ENCODE measurements at regions of chr11 and their contacts with region 1.

Region 1: GRCh38 chr11:65540297-65541092 is 15.6 kb downstream of the SCYL1 start:
- DNase-seq: peak; percentile 90 to 91
- ATAC-seq: peak; percentile 69 to 88
- H3K4me3 ChIP-seq: peak overlapping the region; percentile 32
- H3K27ac ChIP-seq: peak overlapping the region; percentile 66 to 88
- H3K4me1 ChIP-seq: peaks cover 10% of the 10 kb centered on the region
- CTCF ChIP-seq: peak; percentile 82
- EP300 ChIP-seq: no peak; a peak in 1 of 5 replicates
- POLR2A ChIP-seq: peak; percentile 54
- RAD21 ChIP-seq: peak; percentile 82 to 86

Region 2: GRCh38 chr11:64762674-64763525 is 777.6 kb before region 1 on chr11:
- CTCF ChIA-PET with region 1: no interaction called
- POLR2A ChIA-PET with region 1: no interaction called
- DNase-seq: no peak
- ATAC-seq: no peak
- H3K4me3 ChIP-seq: no peak overlapping the region
- H3K27ac ChIP-seq: no peak overlapping the region
- H3K4me1 ChIP-seq: peaks cover 5% of the 10 kb centered on the region; the same call in 1 of the 3 replicates
- CTCF ChIP-seq: no peak
- EP300 ChIP-seq: no peak
- POLR2A ChIP-seq: no peak
- RAD21 ChIP-seq: no peak

Region 3: GRCh38 chr11:64971421-64972233 is 568.9 kb before region 1 on chr11 and contains the start of gene MAJIN:
- CTCF ChIA-PET with region 1: no interaction called
- POLR2A ChIA-PET with region 1: no interaction called
- DNase-seq: peak; percentile 69 to 88
- ATAC-seq: peak; percentile 64 to 79
- H3K4me3 ChIP-seq: peak within 1 kb of the TSS; percentile 27
- H3K27ac ChIP-seq: peak within 1 kb of the TSS; percentile 56 to 71; a peak in 5 of 6 replicates
- H3K4me1 ChIP-seq: peaks cover 9% of the 10 kb centered on the region
- CTCF ChIP-seq: no peak
- EP300 ChIP-seq: no peak
- POLR2A ChIP-seq: no peak; the same call in 1 of the 2 replicates
- RAD21 ChIP-seq: no peak
- polyA plus RNA-seq, gene MAJIN: 0.12 and 0.24 TPM in 2 replicates

Region 4: GRCh38 chr11:65512306-65512705 is 28.2 kb before region 1 on chr11:
- CTCF ChIA-PET with region 1: interaction called, 11 read pairs
- POLR2A ChIA-PET with region 1: interaction called, 3 read pairs
- DNase-seq: no peak
- ATAC-seq: no peak
- H3K4me3 ChIP-seq: no peak overlapping the region
- H3K27ac ChIP-seq: no peak overlapping the region
- H3K4me1 ChIP-seq: peaks cover 15% of the 10 kb centered on the region
- CTCF ChIP-seq: no peak
- EP300 ChIP-seq: no peak
- POLR2A ChIP-seq: no peak
- RAD21 ChIP-seq: no peak

Region 5: DNA sequence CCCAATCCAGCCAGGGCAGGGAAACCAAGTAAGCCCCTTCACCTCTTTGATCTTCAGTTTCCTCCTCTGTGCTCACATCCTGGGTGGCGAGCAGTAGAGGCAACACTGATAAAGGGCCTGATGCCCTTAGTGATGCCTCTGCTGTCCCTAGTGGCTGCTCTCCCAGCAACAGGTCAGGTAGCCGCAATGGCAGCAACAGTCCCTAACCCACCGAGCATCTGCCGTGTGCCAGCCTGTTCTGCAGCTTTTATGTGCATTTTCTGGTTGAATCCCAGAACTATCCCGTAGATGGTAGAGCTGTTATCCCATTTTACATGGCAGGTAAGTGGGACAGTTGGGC is 10.4 kb before region 1 on chr11:
- CTCF ChIA-PET with region 1: interaction called, 66 read pairs
- POLR2A ChIA-PET with region 1: no interaction called
- DNase-seq: peak in 1 of 2 experiments; percentile 58
- ATAC-seq: peak; percentile 67 to 79
- H3K4me3 ChIP-seq: no peak overlapping the region
- H3K27ac ChIP-seq: no peak overlapping the region
- H3K4me1 ChIP-seq: peaks cover 10% of the 10 kb centered on the region
- CTCF ChIP-seq: no peak
- EP300 ChIP-seq: no peak
- POLR2A ChIP-seq: no peak
- RAD21 ChIP-seq: peak in 1 of 2 experiments; percentile 31; a peak in 2 of 5 replicates

Region 6: DNA sequence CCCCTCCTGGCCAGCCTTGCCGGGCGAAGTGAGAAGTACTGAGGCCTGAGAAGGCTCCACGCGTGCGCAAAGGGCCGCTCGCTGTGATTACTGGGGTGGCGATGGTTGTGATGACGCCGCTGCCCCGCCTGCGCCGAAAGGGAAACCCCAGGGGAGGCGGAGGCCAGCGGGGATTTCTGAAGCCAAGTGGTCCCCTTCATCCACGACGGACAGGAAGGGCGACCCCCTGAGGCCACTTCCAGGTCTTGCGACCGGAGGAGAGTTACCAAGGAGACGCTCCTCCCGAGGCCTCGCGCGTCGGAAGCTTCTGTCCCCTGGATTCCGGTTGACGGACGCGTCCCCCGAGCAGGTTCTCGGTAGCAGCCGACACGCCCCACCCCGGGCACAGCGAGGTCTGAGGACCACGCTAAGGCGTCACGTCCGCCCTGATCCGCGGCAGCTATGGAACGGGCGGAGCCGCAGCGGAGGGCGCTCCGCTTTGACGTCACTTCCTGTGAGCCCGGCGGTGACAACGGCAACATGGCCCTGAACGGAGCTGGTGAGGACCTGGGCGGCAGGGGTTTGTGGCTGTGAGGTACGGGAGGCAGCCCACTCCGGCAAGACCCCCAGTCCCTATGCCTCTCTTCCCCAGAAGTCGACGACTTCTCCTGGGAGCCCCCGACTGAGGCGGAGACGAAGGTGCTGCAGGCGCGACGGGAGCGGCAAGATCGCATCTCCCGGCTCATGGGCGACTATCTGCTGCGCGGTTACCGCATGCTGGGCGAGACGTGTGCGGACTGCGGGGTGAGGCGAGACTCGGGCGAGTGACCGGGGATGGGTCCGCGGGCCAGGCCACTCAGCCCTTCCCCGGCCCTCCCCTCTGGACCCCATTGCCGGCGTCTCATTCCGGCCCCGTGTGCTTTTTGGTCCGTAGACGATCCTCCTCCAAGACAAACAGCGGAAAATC is 29.8 kb after region 1 on chr11 and contains the start of gene ZNRD2:
- CTCF ChIA-PET with region 1: interaction called, 393 read pairs
- POLR2A ChIA-PET with region 1: interaction called, 23 read pairs
- DNase-seq: peak; percentile 96 to 99
- ATAC-seq: peak; percentile 72 to 86
- H3K4me3 ChIP-seq: peak within 1 kb of the TSS; percentile 81
- H3K27ac ChIP-seq: peak within 1 kb of the TSS; percentile 83 to 98
- H3K4me1 ChIP-seq: peaks cover 49% of the 10 kb centered on the region
- CTCF ChIP-seq: peak; percentile 66
- EP300 ChIP-seq: 0 out of 5 replicates have a peak, but pooled peaks of 1 of the 2 experiments have one; percentile 26
- POLR2A ChIP-seq: peak; percentile 62
- RAD21 ChIP-seq: peak; percentile 56 to 67
- polyA plus RNA-seq, gene ZNRD2: 28.2 and 32.3 TPM in 2 replicates

Region 7: GRCh38 chr11:65588199-65589054 is 47.9 kb after region 1 on chr11:
- CTCF ChIA-PET with region 1: interaction called, 41 read pairs
- POLR2A ChIA-PET with region 1: interaction called, 3 read pairs
- DNase-seq: peak; percentile 77 to 86
- ATAC-seq: peak; percentile 76 to 90
- H3K4me3 ChIP-seq: no peak overlapping the region
- H3K27ac ChIP-seq: peak overlapping the region in 1 of 2 experiments; percentile 69; a peak in 3 of 6 replicates
- H3K4me1 ChIP-seq: peaks cover 15% of the 10 kb centered on the region
- CTCF ChIP-seq: peak; percentile 50
- EP300 ChIP-seq: no peak
- POLR2A ChIP-seq: no peak
- RAD21 ChIP-seq: peak; percentile 50 to 68

Region 8: GRCh38 chr11:65604258-65604657 is 63.8 kb after region 1 on chr11:
- CTCF ChIA-PET with region 1: interaction called, 15 read pairs
- POLR2A ChIA-PET with region 1: no interaction called
- DNase-seq: no peak
- ATAC-seq: no peak
- H3K4me3 ChIP-seq: no peak overlapping the region
- H3K27ac ChIP-seq: no peak overlapping the region
- H3K4me1 ChIP-seq: no peaks in the 10 kb centered on the region; the same call in 2 of the 3 replicates
- CTCF ChIP-seq: no peak
- EP300 ChIP-seq: no peak
- POLR2A ChIP-seq: no peak
- RAD21 ChIP-seq: no peak